BJ (cell line): ENCODE measurements at regions of chr2 and their contacts with region 1.

Region 1: GRCh38 chr2:218395797-218396687 is 3.6 kb upstream of the CTDSP1 start:
- DNase-seq: peak; percentile 62
- H3K4me3 ChIP-seq: peak overlapping the region; percentile 75
- H3K27me3 ChIP-seq: no peaks in the 10 kb centered on the region
- CTCF ChIP-seq: peak; percentile 76

Region 2: GRCh38 chr2:218292048-218293014 is 103.7 kb before region 1 on chr2 and contains the start of gene TMBIM1:
- CTCF ChIA-PET with region 1: interaction called, 21 read pairs
- POLR2A ChIA-PET with region 1: no interaction called
- DNase-seq: no peak
- H3K4me3 ChIP-seq: peak within 1 kb of the TSS; percentile 89
- H3K27me3 ChIP-seq: no peaks in the 10 kb centered on the region
- CTCF ChIP-seq: peak; percentile 56
- polyA plus RNA-seq, gene TMBIM1: 116 and 206 TPM in 2 replicates

Region 3: GRCh38 chr2:218301176-218301819 is 94.7 kb before region 1 on chr2:
- CTCF ChIA-PET with region 1: interaction called, 21 read pairs
- POLR2A ChIA-PET with region 1: no interaction called
- DNase-seq: no peak
- H3K4me3 ChIP-seq: no peak overlapping the region
- H3K27me3 ChIP-seq: no peaks in the 10 kb centered on the region; the same call in 1 of the 2 replicates
- CTCF ChIP-seq: peak; percentile 93

Region 4: GRCh38 chr2:218370410-218371063 is 25.5 kb before region 1 on chr2:
- CTCF ChIA-PET with region 1: no interaction called
- POLR2A ChIA-PET with region 1: no interaction called
- DNase-seq: no peak
- H3K4me3 ChIP-seq: no peak overlapping the region
- H3K27me3 ChIP-seq: no peaks in the 10 kb centered on the region
- CTCF ChIP-seq: no peak

Region 5: DNA sequence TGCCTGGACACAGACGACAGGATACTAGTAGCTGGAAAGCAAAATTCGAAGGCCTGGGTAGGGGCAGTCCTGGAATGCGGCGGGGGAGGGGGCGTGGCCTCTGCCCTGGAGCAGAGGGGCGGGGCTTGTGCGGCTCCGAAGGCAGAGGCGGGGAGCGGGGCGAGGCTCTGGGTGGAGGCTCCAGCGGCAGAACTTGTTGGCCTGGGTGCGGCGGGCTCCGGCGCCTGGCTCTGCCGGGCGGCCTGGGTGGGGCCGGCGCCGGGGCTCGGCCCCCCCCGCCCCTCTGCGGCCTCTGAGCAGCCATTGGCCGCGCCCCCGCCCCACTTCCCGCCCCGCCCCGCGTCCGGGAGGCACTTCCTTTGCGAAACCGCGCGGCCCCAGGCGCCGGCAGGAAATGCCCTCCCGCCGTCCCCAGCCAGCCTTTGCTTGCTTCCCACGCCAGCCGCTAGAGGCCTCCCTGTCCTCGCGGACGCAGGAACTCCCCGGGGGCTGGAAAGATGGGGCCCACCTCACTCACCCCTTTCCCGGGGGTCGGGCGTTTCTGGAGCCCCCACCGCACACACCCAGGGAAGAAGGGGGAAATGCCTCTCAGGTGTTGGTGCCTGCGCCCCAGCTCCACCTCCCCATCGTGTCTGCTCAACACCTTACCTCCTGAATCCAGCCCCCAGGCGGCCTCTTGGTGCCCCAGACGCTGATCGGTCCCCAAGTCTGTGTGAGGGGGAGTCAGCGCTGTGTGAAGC is 10.3 kb after region 1 on chr2:
- CTCF ChIA-PET with region 1: interaction called, 10 read pairs
- POLR2A ChIA-PET with region 1: interaction called, 6 read pairs
- DNase-seq: peak; percentile 76
- H3K4me3 ChIP-seq: peak overlapping the region; percentile 28
- H3K27me3 ChIP-seq: no peaks in the 10 kb centered on the region
- CTCF ChIP-seq: peak; percentile 90

Region 6: GRCh38 chr2:218456849-218457248 is 60.8 kb after region 1 on chr2:
- CTCF ChIA-PET with region 1: interaction called, 3 read pairs
- POLR2A ChIA-PET with region 1: interaction called, 18 read pairs
- DNase-seq: no peak
- H3K4me3 ChIP-seq: no peak overlapping the region
- H3K27me3 ChIP-seq: no peaks in the 10 kb centered on the region
- CTCF ChIP-seq: no peak

Region 7: DNA sequence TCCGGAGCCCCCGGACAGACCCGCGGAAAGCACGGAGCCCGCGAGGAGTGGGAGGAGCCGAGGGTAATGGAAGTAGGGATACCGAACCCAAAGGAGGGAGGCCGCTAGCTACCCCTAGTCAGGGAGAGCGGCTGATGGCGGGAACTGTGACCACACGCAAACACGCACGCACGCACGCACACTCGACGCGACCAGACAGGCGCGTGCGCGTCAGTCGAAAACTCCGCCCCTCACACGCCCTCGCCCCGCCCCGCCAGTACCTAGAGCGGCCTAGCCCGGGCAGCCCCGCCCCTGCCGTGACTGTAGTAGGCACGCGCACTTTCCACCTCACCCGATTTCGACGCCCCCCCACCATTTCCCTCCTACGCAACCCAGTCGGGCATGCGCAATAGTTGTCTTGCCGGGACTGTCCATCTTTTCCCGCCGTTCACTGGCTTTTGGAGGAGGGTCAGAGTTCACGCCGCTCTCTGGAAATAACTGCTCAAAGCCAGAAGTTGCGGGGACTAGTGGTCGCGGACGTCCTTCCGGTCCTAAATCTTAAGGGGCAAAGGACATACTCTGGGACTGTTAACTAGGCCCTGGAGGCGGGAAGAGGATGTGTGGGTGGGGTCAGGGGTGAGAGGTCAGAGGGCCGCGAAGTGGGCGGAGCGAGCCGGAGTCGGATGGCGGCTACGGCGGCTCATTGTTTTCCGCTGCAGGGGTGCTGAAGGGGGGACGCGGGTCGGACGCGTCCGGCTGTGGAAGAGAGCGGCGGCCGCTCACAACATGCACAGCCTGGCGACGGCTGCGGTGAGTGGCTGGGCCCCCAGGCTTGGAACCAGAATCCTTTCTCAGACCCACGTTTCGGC is 172.4 kb after region 1 on chr2 and contains the starts of genes CNOT9 and USP37:
- CTCF ChIA-PET with region 1: no interaction called
- POLR2A ChIA-PET with region 1: interaction called, 11 read pairs
- DNase-seq: peak; percentile 87
- H3K4me3 ChIP-seq: peak within 1 kb of the TSS; percentile 95
- H3K27me3 ChIP-seq: no peaks in the 10 kb centered on the region
- CTCF ChIP-seq: no peak
- polyA plus RNA-seq, gene CNOT9: 38.3 and 63.7 TPM in 2 replicates
- polyA plus RNA-seq, gene USP37: 1.9 and 3.6 TPM in 2 replicates